BJ (cell line): ENCODE measurements at regions of chr1 and their contacts with region 1.

Region 1: DNA sequence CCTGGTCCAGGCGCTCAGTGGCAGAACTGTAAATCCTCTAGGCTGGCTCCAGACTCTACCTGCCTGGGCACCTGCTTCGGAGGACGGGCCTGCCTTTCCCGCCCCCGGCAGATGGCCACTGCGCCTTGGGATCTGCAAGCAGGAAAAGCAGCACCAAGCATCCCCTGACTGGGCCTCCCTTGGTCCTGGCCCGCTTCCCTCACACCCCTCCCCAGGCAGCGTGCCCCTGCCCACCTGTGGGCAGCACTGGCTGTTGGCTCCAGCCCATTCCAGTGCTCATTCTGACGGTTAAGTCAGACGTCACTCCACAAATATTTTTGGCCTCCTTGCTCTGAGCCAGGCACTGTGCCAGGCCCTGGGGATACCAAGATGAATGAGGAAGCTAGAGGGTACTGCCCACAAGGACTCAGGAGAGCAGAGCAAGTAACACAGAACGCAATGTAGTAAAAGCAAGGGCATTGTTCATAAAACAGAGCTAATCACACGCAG is 22.0 kb upstream of the BLACAT1 start:
- DNase-seq: peak; percentile 39
- H3K4me3 ChIP-seq: no peak overlapping the region
- H3K27me3 ChIP-seq: peaks cover 18% of the 10 kb centered on the region
- CTCF ChIP-seq: no peak

Region 2: DNA sequence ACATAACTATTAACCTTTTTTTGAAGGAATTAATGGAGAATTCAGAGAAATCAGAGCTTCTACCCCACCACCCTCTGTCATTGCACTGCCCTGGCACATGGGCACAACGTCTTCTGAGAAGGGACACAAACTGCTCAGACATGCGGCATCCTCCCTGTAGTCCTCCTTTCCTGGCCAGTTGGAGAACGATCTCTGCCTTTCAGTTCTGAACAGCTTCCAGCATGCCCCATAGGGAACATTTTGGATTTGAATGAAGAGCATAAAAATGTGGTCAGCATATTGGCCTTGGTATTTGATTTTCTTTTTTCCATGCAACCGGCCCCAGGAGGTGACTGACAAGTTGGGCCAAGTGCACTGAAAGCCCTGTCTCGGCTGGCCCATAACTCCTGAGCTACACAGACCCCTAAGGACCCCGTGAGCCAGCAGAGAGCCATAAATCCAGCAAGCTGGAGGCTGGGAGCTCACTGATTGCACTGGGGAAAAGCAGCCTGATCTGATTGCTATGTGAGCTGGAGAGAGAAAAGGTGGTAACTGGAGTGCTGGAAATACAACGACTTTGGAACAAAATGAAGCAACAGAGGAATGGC is 11.1 kb before region 1 on chr1:
- CTCF ChIA-PET with region 1: no interaction called
- POLR2A ChIA-PET with region 1: no interaction called
- DNase-seq: no peak
- H3K4me3 ChIP-seq: no peak overlapping the region
- H3K27me3 ChIP-seq: peaks cover 23% of the 10 kb centered on the region
- CTCF ChIP-seq: no peak

Region 3: GRCh38 chr1:205775015-205775716 is 297.4 kb after region 1 on chr1 and contains the start of gene RAB29:
- CTCF ChIA-PET with region 1: no interaction called
- POLR2A ChIA-PET with region 1: interaction called, 13 read pairs
- DNase-seq: peak; percentile 44
- H3K4me3 ChIP-seq: peak within 1 kb of the TSS; percentile 78
- H3K27me3 ChIP-seq: no peaks in the 10 kb centered on the region
- CTCF ChIP-seq: no peak
- polyA plus RNA-seq, gene RAB29: 12.1 and 13.4 TPM in 2 replicates

Region 4: DNA sequence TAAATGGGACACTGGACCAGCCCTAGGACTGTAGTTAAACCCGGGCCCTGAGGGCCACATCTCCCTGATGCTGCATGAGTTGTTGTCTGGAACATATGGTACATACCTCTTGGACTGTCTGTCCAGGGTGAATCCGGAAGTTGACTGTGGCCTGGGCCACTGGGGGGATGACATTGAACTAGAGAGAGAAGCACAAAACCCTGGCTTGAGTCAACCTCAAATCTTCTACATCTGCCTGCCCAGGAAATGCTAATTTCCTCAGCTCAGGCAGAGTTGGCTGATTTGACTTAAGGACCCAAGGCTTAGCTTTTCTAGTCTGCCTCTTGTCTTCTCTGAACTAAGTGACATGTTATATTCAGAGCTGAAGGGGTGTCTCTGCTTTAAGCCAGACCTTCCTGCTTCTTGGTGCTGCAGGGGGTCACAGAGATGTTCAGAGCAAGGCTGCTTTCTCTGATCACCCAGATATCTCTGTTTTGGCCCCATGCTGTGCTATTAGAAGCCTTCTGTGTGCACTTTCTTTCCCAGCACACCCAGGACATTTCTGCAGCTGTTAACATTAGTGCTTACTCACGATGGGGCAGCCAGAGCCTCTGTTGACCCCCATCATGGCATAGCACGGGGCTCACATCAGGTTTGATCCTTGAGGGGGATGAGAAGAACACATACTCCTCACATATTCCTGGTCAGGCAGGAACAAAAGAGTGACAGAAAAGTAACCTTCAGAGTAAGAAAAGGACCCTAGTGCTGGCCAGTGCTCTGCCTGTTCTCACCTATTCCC is 362.5 kb after region 1 on chr1:
- CTCF ChIA-PET with region 1: no interaction called
- POLR2A ChIA-PET with region 1: no interaction called
- DNase-seq: no peak
- H3K4me3 ChIP-seq: no peak overlapping the region
- H3K27me3 ChIP-seq: no peaks in the 10 kb centered on the region
- CTCF ChIP-seq: no peak